Mammary epithelial cell (primary cell): ENCODE measurements at regions of chr1 and their contacts with region 1.

Region 1: DNA sequence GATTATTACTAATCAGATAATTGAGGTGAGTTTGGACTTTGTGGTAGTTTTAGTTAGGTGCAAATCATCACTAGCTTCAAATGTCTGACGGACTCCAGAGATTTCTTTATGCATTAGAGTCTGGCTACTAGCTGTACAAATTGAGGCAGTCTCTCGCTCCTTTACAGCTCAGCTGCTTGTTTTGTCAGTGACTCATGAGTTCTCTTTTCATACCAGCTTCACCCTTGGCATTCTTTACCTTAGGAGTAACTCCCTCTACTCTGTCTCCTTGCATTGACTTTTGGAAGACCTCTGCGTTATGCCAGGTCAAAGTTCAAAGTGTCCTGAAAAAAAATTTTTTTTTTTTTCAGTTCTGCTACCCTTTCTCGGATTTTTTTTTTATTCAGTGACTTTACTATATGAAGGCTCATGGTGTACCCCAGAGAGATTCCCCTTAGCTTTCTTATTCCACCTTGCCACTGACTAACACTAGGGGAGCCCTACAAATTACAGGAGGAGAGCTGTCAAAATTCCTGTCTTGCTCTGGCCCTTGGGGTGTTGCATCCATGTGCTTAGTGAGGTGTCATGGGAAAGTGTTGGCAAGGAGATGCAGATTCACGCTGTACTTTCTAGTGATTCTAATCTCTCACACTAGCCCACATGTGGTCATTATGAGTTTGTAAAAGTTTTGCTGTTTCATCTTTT is 576.6 kb downstream of the ADGRL2 start:
- DNase-seq: peak; percentile 67
- H3K4me3 ChIP-seq: no peak overlapping the region
- H3K27ac ChIP-seq: no peak overlapping the region
- H3K4me1 ChIP-seq: peaks cover 16% of the 10 kb centered on the region
- H3K27me3 ChIP-seq: no peaks in the 10 kb centered on the region
- CTCF ChIP-seq: peak; percentile 35 to 37

Region 2: GRCh38 chr1:82225421-82226185 is 151.7 kb before region 1 on chr1:
- CTCF ChIA-PET with region 1: no interaction called
- dilution Hi-C with region 1: no loop called
- in situ Hi-C with region 1: no loop called
- intact Hi-C with region 1: loop called (anchors 5 kb)
- DNase-seq: peak; percentile 77
- H3K4me3 ChIP-seq: no peak overlapping the region
- H3K27ac ChIP-seq: peak overlapping the region; percentile 79
- H3K4me1 ChIP-seq: peaks cover 28% of the 10 kb centered on the region
- H3K27me3 ChIP-seq: no peaks in the 10 kb centered on the region
- CTCF ChIP-seq: no peak